Left colon (tissue), 2 donors: ENCODE measurements at regions of chr20 and their contacts with region 1.

Region 1: GRCh38 chr20:49610701-49611538 is 43.0 kb upstream of the PTGIS start:
- DNase-seq: peak; percentile 79 to 83
- ATAC-seq: peak; percentile 76

Region 2: DNA sequence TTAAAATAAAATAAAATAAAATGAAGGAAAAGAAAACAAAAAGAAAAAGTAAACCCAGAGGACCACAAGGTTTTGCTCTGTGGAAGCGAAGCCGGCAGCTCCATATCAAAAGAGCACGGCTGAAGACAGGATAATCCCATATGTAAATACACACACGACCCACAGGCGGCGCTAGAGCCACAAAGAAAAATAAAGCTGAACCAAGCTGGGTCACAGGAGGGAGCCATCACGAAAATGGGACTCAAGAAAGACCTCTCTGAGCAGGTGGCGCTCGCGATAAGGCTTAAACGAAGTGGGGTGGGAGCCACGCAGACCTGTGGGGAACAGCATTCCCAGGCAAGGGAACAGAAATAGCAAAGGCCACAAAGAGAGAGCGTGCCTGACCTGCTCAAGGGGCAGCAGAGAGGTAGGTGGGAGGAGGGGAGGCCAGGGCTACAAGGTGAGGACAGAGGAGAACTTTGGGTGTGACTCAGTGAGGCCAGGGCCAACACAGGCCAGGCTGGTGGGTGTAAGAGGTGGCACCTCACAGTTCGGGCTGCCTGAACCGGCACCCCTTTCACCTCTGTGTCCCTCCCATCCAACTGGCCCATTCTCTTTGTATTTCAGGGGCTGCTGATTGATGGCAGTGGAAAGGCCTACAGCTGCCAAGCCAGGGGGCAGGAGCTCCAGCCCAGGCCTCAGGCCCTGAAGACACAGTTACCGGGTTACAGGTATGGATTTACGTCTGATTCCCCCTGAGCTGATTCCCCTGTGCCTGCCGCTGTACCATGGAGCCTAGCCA is 69.0 kb before region 1 on chr20:
- intact Hi-C with region 1: loop called (anchors 5 to 10 kb)
- DNase-seq: peak; percentile 39 to 63
- ATAC-seq: peak; percentile 85

Region 3: GRCh38 chr20:49846206-49846807 is 235.4 kb after region 1 on chr20:
- intact Hi-C with region 1: loop called (anchors 5 to 10 kb)
- DNase-seq: peak in 1 of 2 donors; percentile 47
- ATAC-seq: peak; percentile 85

Region 4: DNA sequence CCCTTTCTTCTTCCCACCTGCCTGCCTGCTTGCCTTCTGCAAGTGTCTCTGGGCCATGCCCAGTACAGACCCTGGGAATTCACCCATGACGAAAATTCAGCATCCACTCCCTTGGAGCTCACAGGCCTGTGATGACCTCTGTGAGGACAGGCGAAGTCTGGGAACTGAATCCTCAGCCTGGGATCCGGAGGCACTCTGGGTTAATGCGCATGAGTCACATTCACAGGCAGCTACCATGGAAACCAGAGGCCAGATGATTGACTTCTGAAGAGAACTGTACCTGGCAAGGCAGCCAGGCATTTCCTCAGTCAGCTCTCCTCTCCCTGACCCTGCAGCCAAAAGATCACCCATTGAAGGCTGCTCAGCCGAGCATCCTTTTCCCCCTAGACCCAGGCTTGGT is 242.7 kb after region 1 on chr20:
- intact Hi-C with region 1: loop called (anchors 5 to 10 kb)
- DNase-seq: no peak
- ATAC-seq: no peak